IMR-90 (cell line): ENCODE measurements at regions of chr2 and their contacts with region 1.

Region 1: DNA sequence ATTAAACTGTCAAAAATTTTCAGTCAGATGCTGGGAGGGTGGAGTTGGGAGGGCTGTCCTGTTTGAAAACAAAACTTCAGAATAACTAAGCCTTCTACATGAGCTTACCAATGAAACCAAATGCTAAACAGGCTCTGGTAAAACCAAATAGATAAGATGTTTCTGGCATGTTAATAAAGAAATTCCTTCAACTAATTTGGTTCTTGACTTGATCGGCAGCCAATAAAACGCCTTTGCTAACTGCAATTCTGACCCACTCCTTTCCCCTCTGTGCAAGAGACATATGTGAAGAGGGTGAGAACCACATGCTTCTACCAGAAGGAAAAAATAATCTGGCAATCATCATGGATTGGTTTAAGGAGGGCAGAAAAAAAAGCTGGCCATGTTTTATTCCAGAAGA is 20.9 kb downstream of the MAP4K3 start:
- DNase-seq: peak; percentile 56
- ATAC-seq: no peak; the same call in 1 of the 2 replicates
- H3K4me3 ChIP-seq: no peak overlapping the region
- H3K27ac ChIP-seq: no peak overlapping the region
- H3K4me1 ChIP-seq: peaks cover 15% of the 10 kb centered on the region
- H3K27me3 ChIP-seq: no peaks in the 10 kb centered on the region
- CTCF ChIP-seq: no peak
- POLR2A ChIP-seq: no peak
- RAD21 ChIP-seq: no peak

Region 2: DNA sequence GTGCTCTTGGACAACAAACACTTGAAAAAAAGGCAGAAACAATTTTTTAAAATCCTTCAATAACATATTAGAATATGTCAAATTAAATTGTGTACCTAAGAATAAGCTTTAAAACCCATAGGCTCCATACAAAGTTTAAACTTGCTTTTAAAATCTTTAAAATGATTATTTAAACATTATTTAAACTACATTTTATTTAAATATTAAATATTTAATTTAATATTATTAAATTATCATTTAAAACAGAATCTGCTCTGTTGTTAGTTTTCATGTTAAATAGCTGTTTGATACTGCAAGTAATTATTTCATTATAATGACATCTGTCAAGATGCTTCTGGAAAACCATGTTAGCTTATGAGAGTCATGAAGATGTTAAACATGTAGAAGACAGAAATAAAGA is 54.6 kb before region 1 on chr2:
- CTCF ChIA-PET with region 1: no interaction called
- POLR2A ChIA-PET with region 1: no interaction called
- dilution Hi-C with region 1: no loop called
- in situ Hi-C with region 1: no loop called
- intact Hi-C with region 1: no loop called
- DNase-seq: no peak
- ATAC-seq: no peak
- H3K4me3 ChIP-seq: no peak overlapping the region
- H3K27ac ChIP-seq: no peak overlapping the region
- H3K4me1 ChIP-seq: no peaks in the 10 kb centered on the region
- H3K27me3 ChIP-seq: no peaks in the 10 kb centered on the region
- CTCF ChIP-seq: no peak
- POLR2A ChIP-seq: no peak
- RAD21 ChIP-seq: no peak

Region 3: DNA sequence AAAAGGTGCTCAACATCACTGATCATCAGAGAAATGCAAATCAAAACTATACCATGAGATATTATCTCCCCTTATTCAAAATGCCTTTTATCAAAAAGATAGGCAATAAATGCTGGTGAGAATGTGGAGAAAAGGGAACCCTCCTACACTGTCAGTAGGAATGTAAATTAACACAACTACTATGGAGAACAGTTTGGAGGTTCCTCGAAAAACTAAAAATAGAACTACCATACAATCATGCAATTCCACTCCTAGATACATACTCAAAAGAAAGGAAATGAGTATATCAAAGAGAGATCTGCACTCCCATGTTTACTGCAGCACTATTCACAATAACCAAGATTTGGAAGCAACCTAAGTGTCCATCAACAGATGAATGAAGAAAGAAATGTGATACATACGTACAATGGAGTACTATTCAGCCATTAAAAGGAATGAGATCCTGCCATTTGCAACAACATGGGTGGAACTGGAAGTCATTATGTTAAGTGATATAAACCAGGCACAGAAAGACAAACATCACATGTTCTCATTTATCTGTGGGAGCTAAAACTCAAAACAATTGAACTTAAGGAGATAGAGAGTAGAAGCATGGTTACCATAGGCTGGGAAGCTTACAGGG is 42.8 kb before region 1 on chr2:
- CTCF ChIA-PET with region 1: interaction called, 3 read pairs
- POLR2A ChIA-PET with region 1: interaction called, 10 read pairs
- dilution Hi-C with region 1: no loop called
- in situ Hi-C with region 1: no loop called
- intact Hi-C with region 1: no loop called
- DNase-seq: no peak
- ATAC-seq: no peak
- H3K4me3 ChIP-seq: no peak overlapping the region
- H3K27ac ChIP-seq: no peak overlapping the region
- H3K4me1 ChIP-seq: peaks cover 6% of the 10 kb centered on the region; the same call in 1 of the 2 replicates
- H3K27me3 ChIP-seq: no peaks in the 10 kb centered on the region
- CTCF ChIP-seq: no peak
- POLR2A ChIP-seq: no peak
- RAD21 ChIP-seq: no peak

Region 4: DNA sequence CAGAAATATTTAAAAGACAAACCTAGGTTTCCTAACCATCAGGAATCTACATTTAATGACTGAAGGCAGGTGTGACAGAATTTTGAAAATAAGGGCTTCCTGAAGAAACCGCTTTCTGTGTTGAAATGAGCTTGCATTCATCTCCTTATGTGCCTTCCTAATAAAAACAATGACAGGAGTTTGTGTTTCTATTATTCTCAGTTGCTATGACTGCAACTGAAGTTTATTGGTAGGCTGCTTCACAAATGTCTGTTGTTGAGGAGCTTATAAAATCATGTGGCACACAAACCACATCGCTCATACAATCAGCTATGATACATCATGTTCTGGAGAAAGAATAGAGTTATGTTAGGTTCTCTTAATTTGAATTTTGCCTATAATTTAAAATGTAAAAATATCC is 1398.5 kb after region 1 on chr2:
- CTCF ChIA-PET with region 1: no interaction called
- POLR2A ChIA-PET with region 1: no interaction called
- dilution Hi-C with region 1: no loop called
- in situ Hi-C with region 1: no loop called
- intact Hi-C with region 1: no loop called
- DNase-seq: no peak
- ATAC-seq: no peak
- H3K4me3 ChIP-seq: no peak overlapping the region
- H3K27ac ChIP-seq: no peak overlapping the region
- H3K4me1 ChIP-seq: no peaks in the 10 kb centered on the region
- H3K27me3 ChIP-seq: peaks cover 4% of the 10 kb centered on the region
- CTCF ChIP-seq: no peak
- POLR2A ChIP-seq: no peak
- RAD21 ChIP-seq: no peak